Heart left ventricle (tissue), 16 donors: ENCODE measurements at regions of chr2 and their contacts with region 1.

Region 1: DNA sequence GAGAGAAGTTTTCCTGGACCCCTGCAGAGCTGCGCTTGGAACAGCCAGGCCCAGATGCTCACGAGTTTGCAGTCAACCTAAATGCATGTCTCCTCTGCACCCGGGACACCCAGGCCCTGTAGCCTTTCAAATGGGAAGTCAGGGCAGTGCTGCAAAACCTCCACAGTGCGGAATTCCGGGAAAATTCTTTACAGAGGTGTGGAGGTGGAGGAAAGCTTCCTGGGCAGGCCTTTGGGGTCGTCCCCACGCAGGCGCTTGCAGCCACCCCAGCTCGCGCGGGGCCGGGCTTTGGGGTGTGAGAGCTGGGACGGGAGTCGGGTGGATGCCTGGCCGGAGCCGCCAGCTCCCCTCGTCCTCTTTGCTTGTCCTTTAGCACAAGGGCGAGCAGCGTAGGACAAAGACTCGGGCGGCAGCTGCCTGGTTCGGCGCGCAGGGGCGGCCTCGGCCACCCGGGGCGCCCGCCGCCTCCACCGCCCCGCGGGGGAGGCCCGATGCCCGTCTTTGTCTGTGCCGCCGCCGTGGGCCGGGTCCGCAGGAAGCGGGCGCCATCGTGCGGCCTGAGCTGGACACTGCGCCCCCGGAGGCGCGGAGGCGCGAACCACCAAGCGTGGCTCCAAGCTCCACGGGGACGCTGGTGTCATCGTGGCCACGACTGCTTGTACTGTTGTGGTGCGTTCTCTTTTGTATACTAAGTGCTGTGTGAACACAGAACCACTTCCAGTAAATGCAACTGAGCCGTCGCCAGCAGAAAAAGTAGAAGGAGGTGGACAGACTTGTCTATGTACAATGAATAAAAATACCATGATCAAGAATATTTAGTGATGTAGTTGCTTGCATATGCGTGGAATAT is 28.2 kb upstream of the BCL11A start:
- DNase-seq: peak; percentile 46 to 87 (median 59)
- ATAC-seq: peak; percentile 15 to 96 (median 88)
- H3K4me3 ChIP-seq: peak overlapping the region in 11 of 12 donors; percentile 23 to 55 (median 45)
- H3K27ac ChIP-seq: no peak overlapping the region
- H3K4me1 ChIP-seq: peaks cover 0 to 8% (median 0%) of the 10 kb centered on the region in 12 donors
- H3K27me3 ChIP-seq: peaks cover 0 to 49% (median 17%) of the 10 kb centered on the region in 9 donors
- CTCF ChIP-seq: peak; percentile 76 to 97 (median 92)
- POLR2A ChIP-seq: no peak

Region 2: DNA sequence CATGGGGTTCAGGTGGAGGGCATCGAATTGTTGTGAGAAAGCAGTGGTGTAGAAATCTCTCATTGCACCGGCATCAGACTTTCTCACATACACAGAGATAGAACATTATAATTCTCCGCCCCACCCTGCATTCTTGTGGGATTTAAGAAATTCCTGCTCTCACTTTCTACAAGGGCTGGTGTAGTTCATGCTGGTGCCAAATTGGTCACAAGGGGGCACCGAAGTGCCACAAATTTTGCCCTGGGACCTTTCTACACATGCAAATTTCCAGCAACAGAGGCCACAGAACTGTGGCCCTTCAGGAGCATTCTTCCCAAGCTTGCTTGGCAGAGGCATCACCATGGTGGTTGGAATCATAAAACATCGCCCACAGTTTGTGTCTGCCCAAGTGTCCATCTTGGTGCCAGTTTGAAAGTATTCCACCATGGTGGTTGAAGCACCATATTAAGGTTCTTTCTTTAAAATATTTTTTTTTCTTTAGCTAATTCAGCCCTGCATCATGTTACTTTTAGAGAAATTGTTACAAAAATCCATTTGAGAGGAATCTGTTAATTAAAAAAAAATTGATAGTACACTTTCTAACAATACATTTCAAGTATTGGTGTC is 1819.4 kb before region 1 on chr2:
- intact Hi-C with region 1: loop called in 6 of 10 experiments (anchors 5 to 10 kb)
- DNase-seq: peak in 2 of 5 donors; percentile 9 to 29
- ATAC-seq: peak in 2 of 4 donors; percentile 53 to 66
- H3K4me3 ChIP-seq: no peak overlapping the region
- H3K27ac ChIP-seq: no peak overlapping the region
- H3K4me1 ChIP-seq: no peaks in the 10 kb centered on the region
- H3K27me3 ChIP-seq: peaks cover 0 to 10% (median 0%) of the 10 kb centered on the region in 9 donors
- CTCF ChIP-seq: peak; percentile 29 to 60 (median 46)
- POLR2A ChIP-seq: no peak

Region 3: GRCh38 chr2:59025157-59025757 is 1556.4 kb before region 1 on chr2:
- intact Hi-C with region 1: loop called in 2 of 10 experiments (anchors 5 to 10 kb)
- DNase-seq: peak in 1 of 5 donors; percentile 58
- ATAC-seq: peak in 1 of 4 donors; percentile 55
- H3K4me3 ChIP-seq: no peak overlapping the region
- H3K27ac ChIP-seq: no peak overlapping the region
- H3K4me1 ChIP-seq: no peaks in the 10 kb centered on the region
- H3K27me3 ChIP-seq: peaks cover 0 to 7% (median 0%) of the 10 kb centered on the region in 9 donors
- CTCF ChIP-seq: peak; percentile 30 to 62 (median 53)
- POLR2A ChIP-seq: no peak

Region 4: DNA sequence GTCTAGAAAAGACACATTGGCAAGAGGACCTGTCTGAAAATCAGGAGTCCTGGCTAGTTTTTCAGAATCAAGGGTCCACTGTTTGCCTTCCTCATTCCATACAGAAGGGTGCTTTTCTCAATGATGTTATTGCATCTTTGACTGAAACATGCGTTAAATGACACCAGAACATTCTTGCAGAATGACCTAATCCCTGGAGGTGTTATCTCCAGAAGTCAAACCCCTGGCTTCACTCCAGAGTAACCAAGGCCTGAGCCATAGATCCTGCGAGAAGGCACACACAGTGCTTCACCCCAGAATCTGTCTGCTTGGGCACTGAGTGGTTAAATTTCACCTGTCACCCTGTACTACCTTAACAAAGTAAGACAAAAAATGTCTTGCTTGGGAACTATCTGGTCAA is 1285.4 kb before region 1 on chr2:
- intact Hi-C with region 1: loop called in 3 of 10 experiments (anchors 5 to 10 kb)
- DNase-seq: no peak
- ATAC-seq: no peak
- H3K4me3 ChIP-seq: no peak overlapping the region
- H3K27ac ChIP-seq: no peak overlapping the region
- H3K4me1 ChIP-seq: peaks cover 0 to 7% (median 0%) of the 10 kb centered on the region in 12 donors
- H3K27me3 ChIP-seq: no peaks in the 10 kb centered on the region
- CTCF ChIP-seq: no peak
- POLR2A ChIP-seq: no peak